Activated CD4-positive, alpha-beta memory T cell treated with anti-CD3 and anti-CD28 coated beads for 36 hours (primary cell): ENCODE measurements at regions of chr3 and their contacts with region 1.

Region 1: GRCh38 chr3:10551821-10552630 is 46.6 kb upstream of the ATP2B2 start:
- DNase-seq: peak; percentile 88
- H3K4me3 Mint-ChIP-seq: no peak overlapping the region
- H3K27ac Mint-ChIP-seq: peak overlapping the region; percentile 57
- H3K4me1 Mint-ChIP-seq: peaks cover 16% of the 10 kb centered on the region
- H3K27me3 Mint-ChIP-seq: peaks cover 10% of the 10 kb centered on the region

Region 2: DNA sequence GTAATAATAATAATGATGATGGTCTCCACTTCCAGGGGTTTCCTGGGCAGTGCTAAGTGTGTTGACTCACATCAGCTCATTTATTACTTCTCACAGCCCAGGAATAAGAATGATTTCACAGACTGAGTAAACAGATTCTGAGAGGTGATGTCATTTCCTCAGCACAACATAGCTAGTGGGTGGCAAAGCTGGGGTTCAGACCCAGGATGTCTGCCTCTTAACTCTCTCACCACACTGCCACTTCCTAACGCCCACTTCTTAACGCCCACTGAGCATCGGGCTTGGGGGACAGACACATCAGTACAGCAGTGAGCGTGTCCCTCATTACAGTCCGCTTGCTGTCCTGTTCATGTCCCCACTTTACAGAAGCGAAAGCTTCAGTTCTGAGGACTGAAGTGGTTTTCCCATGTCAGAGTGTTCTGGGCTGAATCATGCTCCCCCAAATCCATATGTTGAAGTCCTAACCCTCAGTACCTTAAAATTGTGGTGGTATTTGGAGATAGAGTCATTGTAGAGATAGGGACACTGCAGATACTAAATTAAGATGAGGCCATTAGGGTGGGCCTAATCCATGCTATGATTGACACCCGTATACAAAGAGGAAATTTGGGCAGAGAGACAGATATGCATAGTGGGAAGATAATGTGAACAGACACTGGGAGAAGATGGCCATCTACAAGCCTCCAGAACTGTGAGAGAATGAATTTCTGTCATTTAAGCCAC is 114.6 kb before region 1 on chr3:
- CTCF ChIA-PET with region 1: no interaction called
- POLR2A ChIA-PET with region 1: interaction called, 6 read pairs
- intact Hi-C with region 1: loop called (anchors 10 kb)
- DNase-seq: peak; percentile 85
- H3K4me3 Mint-ChIP-seq: no peak overlapping the region
- H3K27ac Mint-ChIP-seq: peak overlapping the region; percentile 36
- H3K4me1 Mint-ChIP-seq: peaks cover 30% of the 10 kb centered on the region
- H3K27me3 Mint-ChIP-seq: no peaks in the 10 kb centered on the region

Region 3: GRCh38 chr3:10602769-10603768 is 51.0 kb after region 1 on chr3:
- CTCF ChIA-PET with region 1: no interaction called
- POLR2A ChIA-PET with region 1: no interaction called
- intact Hi-C with region 1: loop called (anchors 2 kb)
- DNase-seq: peak; percentile 83
- H3K4me3 Mint-ChIP-seq: peak overlapping the region; percentile 6
- H3K27ac Mint-ChIP-seq: peak overlapping the region; percentile 47
- H3K4me1 Mint-ChIP-seq: peaks cover 33% of the 10 kb centered on the region
- H3K27me3 Mint-ChIP-seq: peaks cover 13% of the 10 kb centered on the region

Region 4: DNA sequence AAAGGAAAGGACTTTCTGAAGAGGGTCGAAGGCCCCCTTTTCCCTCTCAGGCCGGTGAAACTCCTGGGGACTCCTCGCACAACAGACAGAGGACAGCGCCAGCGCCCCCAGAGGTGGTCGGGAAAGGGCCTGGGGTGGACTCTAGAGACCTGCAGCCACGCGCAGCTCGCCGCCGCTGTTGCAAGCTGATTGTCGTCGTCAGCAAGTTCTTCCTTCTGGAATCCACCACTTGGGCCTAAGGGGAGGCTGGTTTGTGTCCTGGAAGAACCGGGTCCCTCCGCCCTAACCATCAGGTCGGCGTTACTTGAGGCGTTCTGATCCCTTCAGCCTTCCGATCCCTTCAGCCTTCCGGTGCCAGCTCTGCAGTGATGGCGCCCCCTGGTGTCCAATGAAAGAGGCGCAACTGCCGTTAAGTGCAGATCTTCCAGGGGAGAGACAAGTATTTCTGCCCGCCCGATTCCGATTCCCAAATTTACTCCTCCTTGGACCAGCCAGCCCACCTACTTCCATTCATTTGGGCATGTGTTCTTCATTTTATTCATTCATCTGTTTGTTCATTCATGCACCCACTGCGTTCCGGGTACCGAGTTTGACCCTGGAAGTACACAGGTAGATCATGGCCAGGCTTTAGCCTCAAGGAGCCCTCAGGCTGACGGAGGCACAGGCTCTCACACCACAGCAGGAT is 186.8 kb after region 1 on chr3:
- CTCF ChIA-PET with region 1: interaction called, 20 read pairs
- POLR2A ChIA-PET with region 1: no interaction called
- intact Hi-C with region 1: no loop called
- DNase-seq: peak; percentile 80
- H3K4me3 Mint-ChIP-seq: no peak overlapping the region
- H3K27ac Mint-ChIP-seq: no peak overlapping the region
- H3K4me1 Mint-ChIP-seq: peaks cover 2% of the 10 kb centered on the region
- H3K27me3 Mint-ChIP-seq: peaks cover 35% of the 10 kb centered on the region